ENCODE measurements at regions of chr1 and their contacts with region 1.

Region 1: GRCh38 chr1:55284852-55285251 is 69.7 kb upstream of the USP24 start:
- DNase-seq: peak; percentile 28
- H3K4me3 ChIP-seq: no peak overlapping the region
- H3K27ac ChIP-seq: no peak overlapping the region
- H3K4me1 ChIP-seq: peaks cover 11% of the 10 kb centered on the region
- H3K27me3 ChIP-seq: no peaks in the 10 kb centered on the region
- CTCF ChIP-seq: peak; percentile 57 to 62

Region 2: GRCh38 chr1:55337801-55338447 is 53.1 kb after region 1 on chr1:
- CTCF ChIA-PET with region 1: interaction called, 3 read pairs
- dilution Hi-C with region 1: no loop called
- in situ Hi-C with region 1: loop called in 1 of 2 experiments (anchors 10 kb)
- intact Hi-C with region 1: loop called (anchors 1 kb)
- DNase-seq: peak; percentile 54
- H3K4me3 ChIP-seq: no peak overlapping the region
- H3K27ac ChIP-seq: no peak overlapping the region
- H3K4me1 ChIP-seq: no peaks in the 10 kb centered on the region
- H3K27me3 ChIP-seq: no peaks in the 10 kb centered on the region
- CTCF ChIP-seq: peak; percentile 58 to 73

Region 3: DNA sequence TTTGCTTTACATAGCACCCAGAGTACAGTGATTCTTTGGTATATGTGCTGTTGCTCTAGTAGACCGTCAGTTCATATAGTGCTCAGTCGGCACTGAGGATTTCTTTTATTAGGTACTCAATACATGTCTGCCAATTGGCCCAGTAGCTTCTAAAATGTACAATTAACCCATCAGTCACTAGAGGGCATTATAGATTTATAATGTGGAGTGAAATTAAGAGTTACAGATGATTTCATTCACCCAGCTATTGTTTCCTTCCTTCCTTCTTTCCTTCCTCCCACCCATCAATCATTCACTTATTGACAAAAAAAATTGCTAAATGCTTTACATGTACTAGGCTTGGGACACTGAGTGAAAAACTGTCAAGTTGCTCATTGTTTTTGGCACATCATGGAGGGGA is 193.9 kb after region 1 on chr1:
- CTCF ChIA-PET with region 1: no interaction called
- dilution Hi-C with region 1: no loop called
- in situ Hi-C with region 1: no loop called
- intact Hi-C with region 1: loop called (anchors 10 kb)
- DNase-seq: peak; percentile 21
- H3K4me3 ChIP-seq: no peak overlapping the region
- H3K27ac ChIP-seq: no peak overlapping the region
- H3K4me1 ChIP-seq: peaks cover 3% of the 10 kb centered on the region
- H3K27me3 ChIP-seq: no peaks in the 10 kb centered on the region
- CTCF ChIP-seq: peak; percentile 43

Region 4: GRCh38 chr1:55893155-55893554 is 608.3 kb after region 1 on chr1:
- CTCF ChIA-PET with region 1: no interaction called
- dilution Hi-C with region 1: no loop called
- in situ Hi-C with region 1: no loop called
- intact Hi-C with region 1: loop called (anchors 2 kb)
- DNase-seq: peak; percentile 55
- H3K4me3 ChIP-seq: no peak overlapping the region
- H3K27ac ChIP-seq: no peak overlapping the region
- H3K4me1 ChIP-seq: no peaks in the 10 kb centered on the region
- H3K27me3 ChIP-seq: no peaks in the 10 kb centered on the region
- CTCF ChIP-seq: peak; percentile 43 to 59

Region 5: DNA sequence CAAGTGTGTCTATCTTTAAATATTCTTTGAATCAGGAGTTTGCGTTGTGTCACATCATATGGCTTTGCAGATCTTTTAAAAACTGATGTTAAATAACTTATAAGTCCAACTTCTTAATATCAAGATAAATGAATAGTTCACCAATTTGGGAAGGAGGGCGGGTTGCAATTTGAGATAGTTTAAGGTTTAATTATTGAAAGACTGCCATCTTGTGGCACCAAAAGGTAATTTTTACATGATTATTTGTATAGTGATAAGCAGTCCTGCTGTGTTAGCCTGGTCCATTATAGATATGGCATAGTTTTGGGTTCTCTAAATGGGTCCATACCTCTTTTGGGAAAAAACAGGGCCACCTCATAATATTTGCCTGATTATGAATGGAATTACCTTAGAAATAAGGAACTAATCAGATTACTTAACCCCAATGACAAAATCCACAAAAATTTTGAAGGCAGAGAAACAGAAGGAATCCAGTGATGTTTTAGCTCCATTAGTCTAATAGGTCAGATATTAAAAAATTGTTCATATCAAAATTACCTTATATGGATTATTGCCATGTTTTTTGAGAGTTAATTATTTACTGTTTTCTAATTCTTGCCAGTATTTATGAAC is 1424.5 kb after region 1 on chr1:
- CTCF ChIA-PET with region 1: no interaction called
- dilution Hi-C with region 1: no loop called
- in situ Hi-C with region 1: no loop called
- intact Hi-C with region 1: loop called (anchors 10 kb)
- DNase-seq: peak; percentile 38
- H3K4me3 ChIP-seq: no peak overlapping the region
- H3K27ac ChIP-seq: no peak overlapping the region
- H3K4me1 ChIP-seq: peaks cover 3% of the 10 kb centered on the region
- H3K27me3 ChIP-seq: no peaks in the 10 kb centered on the region
- CTCF ChIP-seq: peak; percentile 52 to 54

Region 6: DNA sequence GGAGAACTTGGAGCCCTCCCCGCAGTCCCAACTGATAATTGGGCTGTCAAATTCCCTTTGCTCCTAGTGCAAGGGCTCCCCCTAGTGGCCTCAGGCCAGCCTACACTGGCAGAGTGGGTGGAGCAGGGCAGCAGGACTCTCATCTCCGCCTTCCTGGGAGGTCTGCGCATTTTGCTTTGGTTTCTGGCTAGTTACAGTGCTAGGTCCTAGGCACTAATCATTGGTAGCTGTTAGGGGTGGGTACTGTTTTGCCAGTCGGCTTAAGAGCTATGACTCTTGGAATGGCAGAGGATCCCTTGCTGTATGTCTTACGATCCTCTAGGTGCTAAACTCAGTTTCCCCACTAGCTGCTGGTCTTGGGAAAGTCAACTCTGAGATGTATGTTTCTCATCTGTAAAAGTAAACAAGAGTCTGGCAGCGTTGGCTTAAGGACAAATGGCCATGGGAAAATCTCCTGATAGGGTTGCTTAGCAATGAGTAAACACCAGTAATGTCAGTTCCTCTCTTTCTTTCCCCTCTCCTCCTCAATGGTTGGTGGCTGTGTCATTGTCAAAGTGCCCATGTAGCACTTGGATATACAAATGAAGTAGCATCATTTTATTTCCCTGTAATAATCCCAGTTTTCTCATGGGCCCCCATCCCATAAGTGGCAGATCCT is 1536.4 kb after region 1 on chr1:
- CTCF ChIA-PET with region 1: no interaction called
- dilution Hi-C with region 1: no loop called
- in situ Hi-C with region 1: no loop called
- intact Hi-C with region 1: loop called (anchors 5 kb)
- DNase-seq: peak; percentile 48
- H3K4me3 ChIP-seq: no peak overlapping the region
- H3K27ac ChIP-seq: no peak overlapping the region
- H3K4me1 ChIP-seq: peaks cover 26% of the 10 kb centered on the region
- H3K27me3 ChIP-seq: no peaks in the 10 kb centered on the region
- CTCF ChIP-seq: peak; percentile 99